GM13976 (cell line): ENCODE measurements at regions of chr17 and their contacts with region 1.

Region 1: DNA sequence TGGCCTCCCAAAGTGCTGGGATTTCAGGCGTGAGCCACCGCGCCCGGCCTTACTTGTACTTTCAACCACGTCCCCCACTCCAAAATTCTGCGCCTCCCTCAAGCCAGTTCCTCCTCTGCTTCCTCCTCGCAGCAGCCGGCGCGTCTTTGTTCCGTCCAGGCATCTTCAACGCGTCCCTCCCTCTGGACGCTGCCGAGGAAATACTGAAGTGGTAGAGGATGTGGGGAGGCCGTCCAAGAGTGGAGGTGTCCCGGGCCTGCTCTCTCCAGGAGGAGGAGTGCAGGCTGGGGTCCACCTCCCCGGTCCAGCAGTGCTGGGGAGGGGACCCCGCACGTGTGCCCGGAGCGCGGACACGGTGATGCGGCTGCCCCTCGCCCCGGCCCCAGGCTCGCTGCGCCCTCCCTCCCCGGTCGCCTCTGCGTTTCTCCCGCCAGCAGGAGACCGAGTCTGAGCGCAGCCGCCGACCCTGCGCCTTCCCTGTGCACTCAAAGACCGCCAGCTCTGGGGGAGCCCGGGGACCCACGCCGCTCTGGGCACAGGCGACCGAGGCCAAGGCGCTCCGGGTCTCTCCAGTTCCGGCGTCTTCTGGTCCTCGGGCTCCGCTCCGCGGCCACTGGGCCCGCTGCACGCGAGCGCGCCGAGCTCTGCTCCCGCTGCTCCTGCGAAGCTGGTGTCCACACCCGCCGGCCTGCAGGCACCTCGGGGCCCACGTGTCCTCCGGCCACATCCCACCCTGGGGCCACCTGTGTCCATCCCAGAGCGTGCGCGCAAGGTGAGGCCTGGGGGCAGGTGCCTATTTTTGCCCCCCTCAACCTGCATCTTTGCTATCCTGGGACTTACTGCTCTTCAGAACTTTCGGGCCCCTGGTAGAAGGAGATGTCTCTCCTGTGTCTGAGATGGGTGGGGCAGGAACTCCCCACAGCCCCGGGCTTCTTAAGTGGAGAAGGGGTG is 31.7 kb downstream of the OSBPL7 start:
- DNase-seq: peak; percentile 86
- CTCF ChIP-seq: peak; percentile 54

Region 2: GRCh38 chr17:47698749-47699535 is 90.9 kb before region 1 on chr17:
- in situ Hi-C with region 1: loop called (anchors 10 kb)
- DNase-seq: peak; percentile 95
- CTCF ChIP-seq: peak; percentile 91

Region 3: DNA sequence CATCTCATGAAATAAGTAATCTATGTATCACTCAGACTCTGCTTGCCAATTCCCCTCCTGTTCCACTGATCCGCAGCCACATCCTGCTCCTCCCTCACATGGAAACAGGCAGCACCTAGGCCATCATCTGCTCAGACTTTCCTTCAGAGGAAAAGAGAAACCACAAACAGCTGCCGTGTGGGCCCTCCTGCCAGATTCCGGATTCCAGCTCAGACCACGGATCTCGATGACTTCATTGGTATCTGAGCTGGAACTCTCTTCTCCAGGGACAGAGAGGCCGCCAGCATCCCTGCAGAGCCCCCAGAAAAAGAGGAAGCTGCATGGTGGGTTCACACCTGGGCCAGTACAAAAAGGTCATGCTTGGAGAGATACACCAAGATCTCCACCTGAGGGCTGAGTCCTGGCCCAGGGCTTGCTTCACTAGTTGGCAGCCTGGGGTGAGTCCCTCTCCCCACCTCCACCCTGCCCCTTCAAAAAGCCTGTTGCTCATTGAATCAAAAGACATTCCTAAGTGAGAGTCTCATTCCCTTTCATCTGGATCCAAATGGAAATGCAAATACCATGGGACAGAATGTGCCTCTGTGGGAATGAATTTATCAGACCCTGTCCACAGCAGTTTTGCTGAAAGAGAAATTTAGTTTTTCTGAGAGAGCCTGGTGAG is 693.7 kb after region 1 on chr17:
- in situ Hi-C with region 1: no loop called
- DNase-seq: peak; percentile 37
- CTCF ChIP-seq: no peak